ENCODE measurements at regions of chr15 and their contacts with region 1.

Region 1: DNA sequence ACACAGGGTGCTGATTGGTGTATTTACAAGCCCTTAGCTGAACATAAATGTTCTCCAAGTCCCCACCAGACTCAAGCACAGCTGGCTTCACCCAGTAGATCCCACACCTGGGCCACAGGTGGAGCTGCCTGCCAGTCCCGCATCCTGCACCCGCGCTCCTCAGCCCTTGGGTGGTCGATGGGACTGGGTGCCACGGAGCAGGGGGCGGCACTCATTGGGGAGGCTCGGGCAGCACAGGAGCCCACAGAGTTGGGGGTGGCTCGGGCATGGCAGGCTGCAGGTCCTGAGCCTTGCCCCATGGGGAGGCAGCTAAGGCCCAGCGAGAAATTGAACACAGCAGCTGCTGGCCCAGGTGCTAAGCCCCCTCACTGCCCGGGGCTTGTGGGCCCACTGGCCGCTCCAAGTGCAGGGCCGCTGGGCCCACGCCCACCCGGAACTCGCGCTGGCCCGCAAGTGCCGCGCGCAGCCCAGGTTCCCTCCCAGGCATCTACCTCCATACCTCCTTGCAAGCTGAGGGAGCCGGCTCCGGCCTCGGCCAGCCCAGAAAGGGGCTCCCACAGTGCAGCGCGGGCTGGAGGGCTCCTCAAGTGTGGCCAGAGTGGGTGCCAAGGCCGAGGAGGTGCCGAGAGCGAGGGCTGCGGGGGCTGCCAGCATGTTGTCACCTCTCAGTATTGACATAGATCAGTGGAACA is 442.7 kb downstream of the OCA2 start:
- DNase-seq: no peak
- H3K4me3 ChIP-seq: no peak overlapping the region
- H3K27ac ChIP-seq: no peak overlapping the region
- H3K4me1 ChIP-seq: no peaks in the 10 kb centered on the region
- H3K27me3 ChIP-seq: no peaks in the 10 kb centered on the region
- CTCF ChIP-seq: no peak

Region 2: GRCh38 chr15:27638958-27639357 is 17.5 kb before region 1 on chr15:
- intact Hi-C with region 1: loop called (anchors 2 kb)
- DNase-seq: no peak
- H3K4me3 ChIP-seq: no peak overlapping the region
- H3K27ac ChIP-seq: no peak overlapping the region
- H3K4me1 ChIP-seq: no peaks in the 10 kb centered on the region
- H3K27me3 ChIP-seq: no peaks in the 10 kb centered on the region
- CTCF ChIP-seq: no peak